A549 (cell line): ENCODE measurements at regions of chr5 and their contacts with region 1.

Region 1: DNA sequence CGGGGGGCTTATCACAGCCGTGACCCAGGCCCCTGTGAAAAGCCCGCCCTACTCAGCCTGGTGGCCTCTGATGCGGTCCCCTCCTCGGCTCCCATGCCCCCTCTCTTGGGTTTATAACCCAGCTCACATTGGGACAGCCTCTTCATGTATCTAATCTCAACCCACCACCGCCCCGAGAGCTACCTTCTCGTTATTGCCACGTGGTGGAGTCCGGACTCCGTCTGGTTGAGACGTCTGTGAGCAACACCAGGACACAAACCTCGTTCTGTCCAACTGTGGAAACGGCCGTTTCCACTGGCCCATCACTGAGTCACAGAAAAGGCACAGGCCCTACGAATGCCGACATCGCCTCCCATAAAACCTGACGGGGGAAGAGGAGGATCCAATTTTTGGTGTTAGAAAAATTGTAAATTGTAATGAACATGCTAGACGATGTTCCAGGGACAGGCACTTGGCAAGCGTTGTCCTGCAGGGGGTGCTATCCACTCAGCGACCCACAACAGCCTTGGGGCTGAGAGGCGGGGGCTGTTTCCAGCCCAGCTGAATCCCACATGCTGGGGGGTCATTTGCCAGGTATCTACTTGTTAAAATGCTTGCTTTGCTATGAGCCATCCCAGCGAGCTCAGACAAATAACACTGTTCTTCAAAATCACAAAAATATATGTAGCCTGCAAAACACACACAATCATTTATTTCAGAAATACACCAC is 37.3 kb upstream of the N4BP3 start:
- DNase-seq: peak; percentile 70 to 82
- ATAC-seq: peak; percentile 89 to 92
- H3K4me3 ChIP-seq: no peak overlapping the region
- H3K27ac ChIP-seq: no peak overlapping the region
- H3K4me1 ChIP-seq: no peaks in the 10 kb centered on the region
- CTCF ChIP-seq: peak; percentile 96
- EP300 ChIP-seq: no peak
- POLR2A ChIP-seq: no peak
- RAD21 ChIP-seq: peak; percentile 87 to 89

Region 2: GRCh38 chr5:177997307-177997670 is 78.7 kb before region 1 on chr5:
- CTCF ChIA-PET with region 1: no interaction called
- POLR2A ChIA-PET with region 1: no interaction called
- DNase-seq: no peak
- ATAC-seq: peak in 1 of 2 experiments; percentile 44; a peak in 1 of 6 replicates
- H3K4me3 ChIP-seq: no peak overlapping the region
- H3K27ac ChIP-seq: no peak overlapping the region; a peak in 1 of 6 replicates
- H3K4me1 ChIP-seq: no peaks in the 10 kb centered on the region
- CTCF ChIP-seq: no peak
- EP300 ChIP-seq: no peak
- POLR2A ChIP-seq: no peak
- RAD21 ChIP-seq: no peak

Region 3: DNA sequence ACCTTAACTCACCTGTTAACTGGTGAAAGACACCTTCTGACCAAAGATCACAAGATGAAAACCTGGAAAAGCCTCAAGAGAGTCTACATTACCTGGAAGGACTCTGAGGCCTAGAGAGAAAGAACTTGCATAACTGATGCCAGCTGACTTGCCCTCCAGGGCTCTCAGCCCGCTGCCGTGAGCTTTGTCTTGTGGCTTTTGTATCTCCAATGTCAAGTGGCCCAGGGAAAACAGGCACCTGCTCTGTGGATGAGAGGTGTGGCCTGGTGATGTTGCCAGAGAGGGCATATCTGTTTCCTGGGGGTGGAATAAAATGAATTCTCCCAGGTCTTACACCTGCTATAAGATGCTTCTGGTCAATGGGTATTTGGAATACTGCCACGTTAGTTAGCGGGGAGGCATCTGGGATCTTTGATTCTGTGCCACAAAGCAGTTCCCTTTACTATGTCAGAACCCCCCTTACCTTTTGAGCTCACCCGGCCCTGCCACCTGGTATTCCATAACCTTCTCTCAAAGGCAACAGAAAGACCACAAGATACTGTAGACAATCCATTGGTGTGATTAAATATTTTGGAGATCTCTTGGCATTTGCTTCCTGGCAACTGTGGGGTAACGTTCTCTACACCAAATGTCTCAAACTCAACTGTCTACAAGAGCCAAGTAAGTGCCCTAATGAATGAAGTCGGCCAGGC is 17.5 kb before region 1 on chr5:
- CTCF ChIA-PET with region 1: interaction called, 27 read pairs
- POLR2A ChIA-PET with region 1: no interaction called
- DNase-seq: no peak
- ATAC-seq: no peak
- H3K4me3 ChIP-seq: no peak overlapping the region
- H3K27ac ChIP-seq: no peak overlapping the region
- H3K4me1 ChIP-seq: no peaks in the 10 kb centered on the region
- CTCF ChIP-seq: no peak
- EP300 ChIP-seq: no peak
- POLR2A ChIP-seq: no peak
- RAD21 ChIP-seq: no peak

Region 4: DNA sequence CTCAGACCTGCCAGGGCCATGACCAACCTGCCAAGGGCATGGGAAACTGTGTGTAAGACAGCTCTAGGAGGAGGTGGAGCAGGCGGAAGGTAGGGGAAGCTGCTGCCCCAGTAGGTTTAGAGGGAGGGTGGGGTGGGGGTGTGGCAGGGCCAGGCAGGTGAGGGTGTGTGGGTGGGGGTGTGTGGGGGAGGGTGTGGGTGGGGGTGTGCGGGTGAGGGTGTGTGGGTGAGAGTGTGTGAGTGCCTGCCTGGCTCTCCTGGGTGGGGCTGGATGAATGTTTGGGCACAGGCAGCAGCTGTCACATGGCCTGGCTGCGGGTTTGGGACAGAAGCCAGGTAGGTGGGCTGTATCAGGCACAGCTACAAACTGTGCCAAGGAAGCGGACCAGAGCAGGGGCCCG is 28.5 kb after region 1 on chr5:
- CTCF ChIA-PET with region 1: interaction called, 25 read pairs
- POLR2A ChIA-PET with region 1: no interaction called
- DNase-seq: no peak
- ATAC-seq: no peak
- H3K4me3 ChIP-seq: no peak overlapping the region
- H3K27ac ChIP-seq: no peak overlapping the region
- H3K4me1 ChIP-seq: 0 out of 3 replicates have a peak, but pooled peaks cover 3% of the 10 kb centered on the region
- CTCF ChIP-seq: no peak
- EP300 ChIP-seq: no peak
- POLR2A ChIP-seq: no peak
- RAD21 ChIP-seq: no peak

Region 5: GRCh38 chr5:178130604-178131485 is 54.9 kb after region 1 on chr5 and contains the start of gene RMND5B:
- CTCF ChIA-PET with region 1: interaction called, 14 read pairs
- POLR2A ChIA-PET with region 1: interaction called, 6 read pairs
- DNase-seq: peak; percentile 84 to 86
- ATAC-seq: peak; percentile 94
- H3K4me3 ChIP-seq: peak within 1 kb of the TSS; percentile 77
- H3K27ac ChIP-seq: peak within 1 kb of the TSS; percentile 94 to 98
- H3K4me1 ChIP-seq: peaks cover 7% of the 10 kb centered on the region; the same call in 1 of the 3 replicates
- CTCF ChIP-seq: no peak
- EP300 ChIP-seq: no peak
- POLR2A ChIP-seq: peak; percentile 57
- RAD21 ChIP-seq: 0 out of 5 replicates have a peak, but pooled peaks of 1 of the 2 experiments have one; percentile 15
- polyA plus RNA-seq, gene RMND5B: 30.3 and 31.8 TPM in 2 replicates

Region 6: DNA sequence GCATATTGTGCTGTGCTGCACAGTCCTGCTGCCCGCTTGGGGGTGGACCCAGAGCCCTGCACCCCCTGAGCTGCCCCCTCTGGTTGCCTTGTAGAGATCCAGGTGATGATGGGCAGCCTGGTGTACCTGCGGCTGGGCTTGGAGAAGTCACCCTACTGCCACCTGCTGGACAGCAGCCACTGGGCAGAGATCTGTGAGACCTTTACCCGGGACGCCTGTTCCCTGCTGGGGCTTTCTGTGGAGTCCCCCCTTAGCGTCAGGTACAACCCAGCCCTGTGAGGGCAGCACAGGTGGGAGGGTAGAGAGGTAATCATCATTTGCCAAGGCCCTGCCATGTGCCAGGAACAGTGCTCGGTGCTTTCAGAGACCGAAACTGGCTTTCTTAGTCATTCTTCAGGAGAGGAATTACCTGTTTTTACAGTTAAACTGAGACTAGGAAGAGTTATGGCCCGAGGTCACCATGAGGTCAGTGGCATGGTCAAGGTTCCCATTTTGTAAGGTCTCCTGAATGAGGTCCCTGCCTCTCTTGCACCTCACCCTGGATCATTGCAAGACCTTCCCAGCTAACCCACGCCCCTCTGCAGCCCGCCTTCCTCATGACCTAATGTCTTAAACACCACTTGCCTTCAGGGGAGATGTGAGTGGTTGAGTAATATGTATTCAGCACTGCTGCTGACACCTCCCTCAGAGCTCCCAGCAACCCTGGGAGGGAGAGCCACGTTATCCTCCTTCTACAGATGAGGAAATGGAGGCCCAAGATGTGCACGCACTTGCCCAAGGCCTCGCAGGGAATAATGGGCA is 70.2 kb after region 1 on chr5:
- CTCF ChIA-PET with region 1: interaction called, 174 read pairs
- POLR2A ChIA-PET with region 1: no interaction called
- DNase-seq: peak; percentile 75 to 82
- ATAC-seq: peak; percentile 86 to 90
- H3K4me3 ChIP-seq: no peak overlapping the region
- H3K27ac ChIP-seq: no peak overlapping the region
- H3K4me1 ChIP-seq: peaks cover 8% of the 10 kb centered on the region; the same call in 2 of the 3 replicates
- CTCF ChIP-seq: peak; percentile 83
- EP300 ChIP-seq: no peak
- POLR2A ChIP-seq: no peak
- RAD21 ChIP-seq: peak; percentile 56 to 63

Region 7: DNA sequence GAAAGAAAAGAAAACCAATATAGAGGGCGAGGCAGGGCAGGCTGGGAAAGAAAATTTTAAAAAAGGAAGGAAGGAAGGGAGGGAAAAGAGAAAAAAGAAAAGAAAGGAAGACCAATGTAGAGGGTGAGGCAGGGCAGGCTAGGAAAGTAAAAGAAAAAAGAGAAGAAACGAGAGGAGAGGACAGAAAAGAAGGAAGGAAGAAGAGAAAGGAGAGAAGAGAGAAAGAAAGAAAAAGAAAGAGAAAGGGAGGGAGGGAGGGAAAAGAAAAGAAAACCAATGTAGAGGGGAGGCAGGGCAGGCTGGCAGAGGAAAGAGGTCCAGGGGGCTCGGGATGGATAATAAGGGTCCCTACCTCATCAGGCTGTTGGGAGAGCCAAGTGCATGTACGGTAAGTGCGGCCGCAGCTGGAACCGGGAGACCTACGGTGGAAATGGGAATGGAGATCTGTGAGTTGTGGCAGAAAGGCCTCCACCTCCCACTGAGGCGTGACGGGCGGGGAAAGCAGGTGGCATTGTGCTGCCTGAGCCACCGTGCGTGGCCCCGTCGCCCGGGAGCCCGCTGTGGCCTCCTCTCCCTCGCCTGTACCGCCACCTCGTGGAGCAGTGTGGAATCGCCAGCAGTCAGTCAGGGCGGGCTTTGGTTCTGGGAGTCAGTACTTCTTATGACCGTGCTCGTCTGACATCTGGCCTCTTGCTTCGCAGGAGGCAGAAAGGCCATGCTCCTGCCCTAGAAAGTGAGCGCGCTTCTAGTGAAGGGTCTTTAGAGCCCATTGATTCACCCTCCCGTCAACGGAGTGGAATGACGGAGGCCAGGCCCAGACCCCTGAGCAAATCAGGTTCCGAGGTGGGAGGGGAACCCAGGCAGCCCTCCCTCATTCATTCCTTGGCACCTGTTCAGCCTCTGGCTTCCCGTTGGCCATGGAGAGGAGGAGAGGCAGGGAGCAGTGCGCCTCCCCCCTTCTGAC is 88.1 kb after region 1 on chr5:
- CTCF ChIA-PET with region 1: interaction called, 110 read pairs
- POLR2A ChIA-PET with region 1: no interaction called
- DNase-seq: peak; percentile 77 to 89
- ATAC-seq: peak; percentile 95 to 99
- H3K4me3 ChIP-seq: peak overlapping the region; percentile 15; the same call in 1 of the 3 replicates
- H3K27ac ChIP-seq: 0 out of 6 replicates have a peak overlapping the region, but pooled peaks of 1 of the 2 experiments have one; percentile 18
- H3K4me1 ChIP-seq: no peaks in the 10 kb centered on the region
- CTCF ChIP-seq: peak; percentile 88
- EP300 ChIP-seq: no peak
- POLR2A ChIP-seq: no peak
- RAD21 ChIP-seq: peak; percentile 91 to 92

Region 8: GRCh38 chr5:178279725-178280438 is 203.9 kb after region 1 on chr5:
- CTCF ChIA-PET with region 1: no interaction called
- POLR2A ChIA-PET with region 1: no interaction called
- DNase-seq: peak; percentile 54
- ATAC-seq: peak; percentile 68 to 94; a peak in 5 of 6 replicates
- H3K4me3 ChIP-seq: no peak overlapping the region
- H3K27ac ChIP-seq: no peak overlapping the region
- H3K4me1 ChIP-seq: no peaks in the 10 kb centered on the region
- CTCF ChIP-seq: peak; percentile 58
- EP300 ChIP-seq: no peak
- POLR2A ChIP-seq: no peak
- RAD21 ChIP-seq: peak; percentile 81 to 90